ENCODE measurements at regions of chr6 and their contacts with region 1.

Region 1: DNA sequence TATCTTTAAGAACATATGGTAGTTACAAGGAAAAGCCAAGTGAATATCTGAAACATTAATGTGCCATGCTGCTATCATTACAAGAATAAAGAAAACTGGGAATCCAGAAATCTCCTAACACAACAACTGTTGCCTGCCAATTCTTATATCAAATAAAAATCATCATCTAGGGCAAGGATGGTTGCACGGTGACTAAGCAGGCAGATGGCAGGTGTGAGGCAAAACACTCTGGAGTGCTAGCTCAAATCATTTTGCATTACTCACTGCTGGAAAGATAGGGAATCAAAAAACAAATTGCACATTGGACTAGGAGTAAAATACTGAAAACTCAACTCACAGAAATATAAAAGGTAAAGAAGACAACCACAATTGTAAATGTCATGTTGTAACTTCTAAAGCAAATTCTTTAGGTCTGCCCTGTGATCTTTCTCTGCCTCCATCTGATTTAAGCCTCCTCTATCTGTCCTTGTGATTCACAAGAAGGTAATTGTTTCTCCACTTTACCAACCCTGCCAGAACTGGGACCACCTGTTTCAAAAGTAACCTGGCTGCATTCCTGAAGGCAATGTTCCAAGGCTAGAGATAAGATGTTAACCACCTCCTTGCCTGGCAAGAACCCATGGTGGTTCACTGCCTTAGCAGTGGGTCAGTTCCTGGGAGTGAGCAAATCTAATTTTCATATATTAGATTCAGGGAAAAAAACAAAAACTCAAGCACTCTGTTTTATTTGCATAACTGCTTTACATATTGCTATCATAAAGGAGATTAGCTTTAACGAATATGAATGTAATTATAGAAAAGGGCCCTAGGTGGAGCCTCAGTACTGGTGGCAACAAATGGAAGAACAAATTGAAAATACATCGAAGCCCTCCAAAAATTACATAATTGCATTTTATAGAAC is 33.1 kb upstream of the LCA5 start:
- DNase-seq: peak; percentile 57
- ATAC-seq: peak; percentile 77
- H3K4me3 ChIP-seq: no peak overlapping the region
- H3K27ac ChIP-seq: peak overlapping the region; percentile 34
- H3K4me1 ChIP-seq: peaks cover 41% of the 10 kb centered on the region
- H3K27me3 ChIP-seq: no peaks in the 10 kb centered on the region
- CTCF ChIP-seq: peak; percentile 65
- EP300 ChIP-seq: peak in 1 of 2 experiments; percentile 62; a peak in 1 of 4 replicates
- POLR2A ChIP-seq: no peak
- RAD21 ChIP-seq: peak; percentile 78

Region 2: DNA sequence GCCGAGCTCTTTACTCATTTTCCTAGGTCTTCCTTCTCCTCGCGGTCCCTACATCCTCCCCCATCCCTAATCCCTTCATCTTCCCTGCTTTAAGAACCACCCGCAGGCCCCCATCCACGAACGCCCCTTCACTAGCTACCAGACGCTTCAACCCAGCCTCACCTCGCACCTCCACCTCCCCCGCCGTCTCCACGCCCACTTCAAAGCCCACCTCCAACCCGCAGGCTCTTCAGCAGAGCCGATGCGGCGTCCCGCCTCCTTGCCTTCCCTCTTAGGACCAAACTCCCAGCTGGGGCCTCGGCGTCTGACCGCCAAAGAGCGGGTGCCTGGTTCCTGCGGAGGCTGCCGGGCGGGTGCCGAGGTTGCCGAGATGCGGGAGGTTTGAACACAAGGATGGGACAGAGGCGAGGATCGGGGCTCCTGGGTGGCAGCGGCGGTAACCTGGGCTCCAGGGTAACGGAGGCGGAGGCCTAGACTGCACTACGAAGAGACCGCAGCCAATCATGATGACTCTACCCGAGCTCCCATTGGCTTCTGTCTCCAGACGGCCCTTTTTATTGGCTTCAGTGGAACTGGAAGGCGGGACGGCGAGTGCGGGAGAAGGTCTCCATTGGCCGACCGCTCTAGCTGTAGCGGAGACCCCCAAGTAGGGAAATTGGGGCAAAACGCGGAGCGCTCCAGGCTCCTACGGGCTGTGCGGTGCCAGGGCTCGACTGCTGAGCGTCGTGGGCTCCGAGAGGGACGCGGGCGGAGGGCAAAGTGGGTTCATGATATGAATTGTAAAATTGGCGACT is 33.2 kb before region 1 on chr6 and contains the start of gene LCA5:
- CTCF ChIA-PET with region 1: no interaction called
- POLR2A ChIA-PET with region 1: interaction called, 3 read pairs
- in situ Hi-C with region 1: no loop called
- intact Hi-C with region 1: loop called (anchors 5 kb)
- DNase-seq: peak; percentile 97
- ATAC-seq: peak; percentile 99
- H3K4me3 ChIP-seq: peak within 1 kb of the TSS; percentile 84 to 97 (median 95)
- H3K27ac ChIP-seq: peak within 1 kb of the TSS; percentile 64
- H3K4me1 ChIP-seq: peaks cover 43% of the 10 kb centered on the region
- H3K27me3 ChIP-seq: no peaks in the 10 kb centered on the region
- CTCF ChIP-seq: no peak
- EP300 ChIP-seq: 0 out of 4 replicates have a peak, but pooled peaks of 1 of the 2 experiments have one; percentile 22
- POLR2A ChIP-seq: peak; percentile 78 to 86
- RAD21 ChIP-seq: 0 out of 2 replicates have a peak, but pooled peaks have one; percentile 18
- total RNA-seq, gene LCA5: 4.6 and 7.7 TPM in 2 replicates

Region 3: GRCh38 chr6:79557673-79558467 is 12.5 kb before region 1 on chr6:
- CTCF ChIA-PET with region 1: no interaction called
- POLR2A ChIA-PET with region 1: no interaction called
- in situ Hi-C with region 1: no loop called
- intact Hi-C with region 1: no loop called
- DNase-seq: peak; percentile 85
- ATAC-seq: peak; percentile 100
- H3K4me3 ChIP-seq: no peak overlapping the region
- H3K27ac ChIP-seq: peak overlapping the region; percentile 67
- H3K4me1 ChIP-seq: peaks cover 25% of the 10 kb centered on the region
- H3K27me3 ChIP-seq: no peaks in the 10 kb centered on the region
- CTCF ChIP-seq: no peak
- EP300 ChIP-seq: peak; percentile 44 to 74; a peak in 3 of 4 replicates
- POLR2A ChIP-seq: no peak
- RAD21 ChIP-seq: no peak

Region 4: DNA sequence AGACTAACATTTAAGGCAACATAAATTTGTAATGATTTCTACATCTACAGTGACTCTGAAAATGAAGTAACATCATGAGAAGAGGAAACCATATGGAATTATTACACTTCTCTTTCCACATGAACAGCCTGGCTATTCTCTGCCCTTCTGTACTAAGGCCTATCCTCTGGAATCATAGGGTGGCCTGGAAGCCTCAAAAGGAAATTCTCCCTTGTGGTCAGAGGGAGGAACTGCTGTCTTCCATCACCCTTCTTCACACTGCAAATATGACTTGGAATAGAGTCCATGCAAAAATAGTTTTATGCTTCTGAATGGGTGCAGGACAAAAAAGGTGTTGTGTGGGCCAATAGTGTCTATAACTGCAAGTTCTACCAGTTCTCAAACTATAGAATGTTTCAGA is 16.2 kb after region 1 on chr6:
- CTCF ChIA-PET with region 1: no interaction called
- POLR2A ChIA-PET with region 1: no interaction called
- in situ Hi-C with region 1: no loop called
- intact Hi-C with region 1: no loop called
- DNase-seq: peak; percentile 57
- ATAC-seq: peak; percentile 98
- H3K4me3 ChIP-seq: no peak overlapping the region
- H3K27ac ChIP-seq: no peak overlapping the region
- H3K4me1 ChIP-seq: no peaks in the 10 kb centered on the region
- H3K27me3 ChIP-seq: no peaks in the 10 kb centered on the region; a peak in 1 of 5 replicates
- CTCF ChIP-seq: peak; percentile 29; the same call in 1 of the 2 replicates
- EP300 ChIP-seq: no peak
- POLR2A ChIP-seq: no peak
- RAD21 ChIP-seq: peak; percentile 18; the same call in 1 of the 2 replicates

Region 5: DNA sequence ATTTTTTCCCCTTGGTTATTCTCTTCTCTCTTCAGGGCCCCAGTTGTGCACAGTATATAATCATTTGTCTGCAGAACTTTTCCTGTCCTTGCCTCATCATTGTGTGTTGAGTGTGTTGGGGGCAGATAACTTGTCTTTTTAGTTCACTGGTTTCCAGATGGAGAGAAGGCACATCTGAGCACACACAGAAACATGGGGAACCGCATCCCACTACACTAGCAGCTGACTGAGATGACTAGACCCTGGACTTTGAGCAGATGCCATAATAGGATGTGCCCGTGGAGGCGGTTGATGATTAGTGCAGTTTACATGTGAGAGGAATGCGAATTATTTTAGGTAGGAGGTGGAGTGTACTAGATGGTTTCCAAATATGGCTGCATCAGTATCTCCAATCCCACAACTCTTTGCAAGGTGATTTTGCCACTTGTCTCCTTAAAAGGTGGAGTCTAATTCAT is 34.2 kb after region 1 on chr6:
- CTCF ChIA-PET with region 1: no interaction called
- POLR2A ChIA-PET with region 1: interaction called, 5 read pairs
- in situ Hi-C with region 1: loop called (anchors 5 kb)
- intact Hi-C with region 1: loop called (anchors 2 kb)
- DNase-seq: peak; percentile 95
- ATAC-seq: peak; percentile 73
- H3K4me3 ChIP-seq: no peak overlapping the region
- H3K27ac ChIP-seq: peak overlapping the region; percentile 54
- H3K4me1 ChIP-seq: peaks cover 84% of the 10 kb centered on the region
- H3K27me3 ChIP-seq: no peaks in the 10 kb centered on the region
- CTCF ChIP-seq: no peak
- EP300 ChIP-seq: peak; percentile 21 to 73; a peak in 2 of 4 replicates
- POLR2A ChIP-seq: peak in 1 of 2 experiments; percentile 34; a peak in 1 of 4 replicates
- RAD21 ChIP-seq: no peak

Region 6: DNA sequence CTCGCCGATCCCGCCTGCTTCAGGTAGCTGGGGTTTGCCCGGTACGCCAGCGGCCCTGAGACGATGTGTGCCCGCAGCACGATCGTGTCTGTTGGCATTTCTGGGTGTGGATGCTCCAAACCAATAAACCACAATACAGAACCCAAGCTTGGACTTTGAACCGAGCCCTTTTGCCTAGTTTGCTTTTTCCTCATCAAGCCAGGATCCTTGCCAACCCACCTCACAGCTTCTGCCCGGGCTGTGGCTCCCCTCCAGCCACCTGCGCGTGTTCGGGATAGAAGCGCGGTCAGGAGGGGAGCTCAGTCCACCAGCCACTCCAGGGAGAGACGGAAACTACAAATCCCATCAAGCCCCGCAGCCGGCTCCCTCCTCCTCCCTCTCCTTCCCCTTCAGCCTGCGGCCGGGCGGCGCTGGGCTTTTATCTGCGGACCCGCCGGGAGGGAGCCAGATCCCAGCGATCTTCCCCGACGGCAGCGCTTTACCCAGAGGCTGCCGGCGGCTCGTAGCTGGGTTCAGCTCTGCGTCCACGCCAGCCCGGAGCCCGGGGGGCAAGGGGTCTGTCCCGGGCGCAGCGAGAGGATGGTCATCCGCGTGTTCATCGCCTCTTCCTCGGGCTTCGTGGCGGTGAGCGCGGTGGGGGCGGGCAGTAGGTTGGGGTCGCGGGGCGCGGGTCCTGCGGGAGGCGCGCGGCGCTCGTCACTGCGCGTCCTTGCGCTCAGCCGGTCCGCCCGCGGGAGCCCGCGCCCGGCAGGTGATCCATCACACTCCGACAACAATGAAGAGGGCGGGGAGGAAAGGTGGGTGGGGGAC is 60.7 kb after region 1 on chr6 and contains the start of gene SH3BGRL2:
- CTCF ChIA-PET with region 1: no interaction called
- POLR2A ChIA-PET with region 1: interaction called, 10 read pairs
- in situ Hi-C with region 1: no loop called
- intact Hi-C with region 1: loop called (anchors 1 kb)
- DNase-seq: peak; percentile 89
- ATAC-seq: peak; percentile 94
- H3K4me3 ChIP-seq: peak within 1 kb of the TSS; percentile 76 to 83 (median 81)
- H3K27ac ChIP-seq: peak within 1 kb of the TSS; percentile 92
- H3K4me1 ChIP-seq: peaks cover 60% of the 10 kb centered on the region
- H3K27me3 ChIP-seq: no peaks in the 10 kb centered on the region; a peak in 1 of 5 replicates
- CTCF ChIP-seq: no peak
- EP300 ChIP-seq: no peak; a peak in 1 of 4 replicates
- POLR2A ChIP-seq: peak; percentile 62 to 71
- RAD21 ChIP-seq: peak; percentile 23; the same call in 1 of the 2 replicates
- total RNA-seq, gene SH3BGRL2: 28.8 and 49.2 TPM in 2 replicates

Region 7: DNA sequence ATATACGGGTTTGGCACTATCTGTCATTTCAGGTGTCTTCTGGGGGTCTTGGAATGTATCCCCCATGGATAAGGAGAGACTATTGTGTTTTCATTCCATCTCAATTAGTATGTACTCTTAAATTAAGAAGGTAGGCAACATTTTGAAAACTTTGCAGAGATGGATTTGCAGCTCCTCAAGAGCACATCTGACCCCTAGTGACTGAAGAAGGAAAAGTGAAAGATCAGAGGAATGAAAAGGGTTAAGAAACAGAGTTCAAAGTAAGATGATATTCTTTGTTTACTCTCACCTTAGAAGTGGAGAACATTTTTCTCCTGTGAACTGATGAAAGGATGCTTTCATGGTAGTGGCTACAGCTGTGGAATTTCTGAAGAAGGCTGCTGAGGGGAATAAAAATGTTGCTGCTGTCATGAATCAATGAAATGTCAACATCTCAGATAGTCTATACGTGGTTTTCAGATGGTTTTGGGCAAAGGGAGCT is 102.3 kb after region 1 on chr6:
- CTCF ChIA-PET with region 1: interaction called, 11 read pairs
- POLR2A ChIA-PET with region 1: no interaction called
- in situ Hi-C with region 1: loop called (anchors 5 kb)
- intact Hi-C with region 1: loop called (anchors 1 kb)
- DNase-seq: peak; percentile 76
- ATAC-seq: peak; percentile 77
- H3K4me3 ChIP-seq: no peak overlapping the region
- H3K27ac ChIP-seq: peak overlapping the region; percentile 2
- H3K4me1 ChIP-seq: peaks cover 68% of the 10 kb centered on the region
- H3K27me3 ChIP-seq: no peaks in the 10 kb centered on the region
- CTCF ChIP-seq: peak; percentile 71
- EP300 ChIP-seq: peak in 1 of 2 experiments; percentile 62; a peak in 2 of 4 replicates
- POLR2A ChIP-seq: no peak
- RAD21 ChIP-seq: 0 out of 2 replicates have a peak, but pooled peaks have one; percentile 17

Region 8: GRCh38 chr6:79713701-79714322 is 143.4 kb after region 1 on chr6:
- CTCF ChIA-PET with region 1: interaction called, 23 read pairs
- POLR2A ChIA-PET with region 1: no interaction called
- in situ Hi-C with region 1: loop called (anchors 5 kb)
- intact Hi-C with region 1: loop called (anchors 1 kb)
- DNase-seq: peak; percentile 54
- ATAC-seq: peak; percentile 88
- H3K4me3 ChIP-seq: no peak overlapping the region
- H3K27ac ChIP-seq: no peak overlapping the region
- H3K4me1 ChIP-seq: no peaks in the 10 kb centered on the region
- H3K27me3 ChIP-seq: no peaks in the 10 kb centered on the region
- CTCF ChIP-seq: peak; percentile 72
- EP300 ChIP-seq: no peak
- POLR2A ChIP-seq: no peak
- RAD21 ChIP-seq: peak; percentile 40; the same call in 1 of the 2 replicates

Region 9: GRCh38 chr6:79719248-79719960 is 149.0 kb after region 1 on chr6:
- CTCF ChIA-PET with region 1: interaction called, 23 read pairs
- POLR2A ChIA-PET with region 1: no interaction called
- in situ Hi-C with region 1: loop called (anchors 5 kb)
- intact Hi-C with region 1: no loop called
- DNase-seq: no peak
- ATAC-seq: no peak
- H3K4me3 ChIP-seq: no peak overlapping the region
- H3K27ac ChIP-seq: no peak overlapping the region
- H3K4me1 ChIP-seq: no peaks in the 10 kb centered on the region
- H3K27me3 ChIP-seq: peaks cover 1 to 13% of the 10 kb centered on the region in 2 experiments; a peak in 3 of 5 replicates
- CTCF ChIP-seq: no peak
- EP300 ChIP-seq: no peak
- POLR2A ChIP-seq: no peak
- RAD21 ChIP-seq: no peak

Region 10: DNA sequence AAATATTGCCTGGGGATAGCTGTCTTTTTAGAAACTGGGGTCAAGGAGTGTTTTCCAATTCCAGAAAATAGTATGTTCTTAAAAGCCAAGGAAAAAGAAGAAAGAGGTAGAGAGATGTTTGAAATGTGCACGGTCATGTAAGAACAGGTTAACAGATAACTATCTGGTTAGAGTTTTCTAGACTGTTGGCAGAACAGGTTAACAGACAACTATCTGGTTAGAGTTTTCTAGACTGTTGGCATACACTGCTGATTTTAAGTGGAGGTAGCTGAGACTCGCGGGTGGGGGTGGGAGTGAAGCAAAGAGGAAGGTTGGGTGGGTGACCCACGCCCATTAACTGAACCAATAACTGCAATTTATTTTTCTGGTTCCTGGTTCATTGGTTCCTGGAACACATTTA is 219.5 kb after region 1 on chr6:
- CTCF ChIA-PET with region 1: no interaction called
- POLR2A ChIA-PET with region 1: no interaction called
- in situ Hi-C with region 1: no loop called
- intact Hi-C with region 1: no loop called
- DNase-seq: no peak
- ATAC-seq: no peak
- H3K4me3 ChIP-seq: no peak overlapping the region
- H3K27ac ChIP-seq: no peak overlapping the region
- H3K4me1 ChIP-seq: no peaks in the 10 kb centered on the region
- H3K27me3 ChIP-seq: no peaks in the 10 kb centered on the region; a peak in 1 of 5 replicates
- CTCF ChIP-seq: no peak
- EP300 ChIP-seq: no peak
- POLR2A ChIP-seq: no peak
- RAD21 ChIP-seq: no peak